ENCODE measurements at regions of chr17 and their contacts with region 1.

Region 1: DNA sequence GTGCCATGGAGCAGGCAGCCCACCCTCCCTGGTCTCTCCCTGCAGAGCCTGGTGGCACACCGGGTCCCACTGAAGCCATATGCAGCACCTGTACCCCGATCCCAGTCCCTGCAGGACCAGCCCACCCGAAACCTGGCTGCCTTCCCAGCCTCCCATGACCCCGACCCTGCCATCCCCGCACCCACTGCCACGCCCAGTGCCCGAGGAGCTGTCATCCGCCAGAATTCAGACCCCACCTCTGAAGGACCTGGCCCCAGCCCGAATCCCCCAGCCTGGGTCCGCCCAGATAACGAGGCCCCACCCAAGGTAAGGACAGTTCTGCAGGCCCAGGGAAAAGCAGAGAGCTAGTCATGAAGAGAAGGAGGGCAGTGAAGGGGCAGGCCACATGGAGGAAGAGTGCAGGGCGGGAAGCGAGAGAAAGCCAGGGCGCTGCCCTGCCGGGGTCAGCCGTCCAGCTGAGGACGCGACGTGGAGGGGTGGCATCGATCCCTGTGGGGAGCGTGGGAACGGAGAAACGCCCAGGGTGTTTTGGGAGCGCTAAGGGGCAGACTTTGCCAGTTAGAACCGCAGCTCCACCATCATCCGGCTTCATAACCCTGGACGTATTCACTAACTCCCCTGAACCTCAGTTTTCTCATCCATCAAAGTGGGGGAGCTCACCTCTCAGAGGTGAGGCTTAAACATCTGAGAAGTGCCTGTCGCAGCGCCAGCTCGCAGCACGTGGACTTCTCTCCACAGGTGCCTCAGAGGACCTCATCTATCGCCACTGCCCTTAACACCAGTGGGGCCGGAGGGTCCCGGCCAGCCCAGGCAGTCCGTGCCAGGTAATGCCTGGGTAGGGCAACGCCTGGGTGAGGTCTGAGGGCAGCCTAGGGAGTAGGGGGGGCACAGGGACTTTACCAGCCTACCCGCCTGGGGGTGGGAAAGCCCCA is 7.7 kb upstream of the C17orf107 start:
- DNase-seq: peak in 2 of 5 donors; percentile 25 to 66
- ATAC-seq: no peak
- H3K4me3 ChIP-seq: no peak overlapping the region
- H3K27ac ChIP-seq: no peak overlapping the region
- H3K4me1 ChIP-seq: no peaks in the 10 kb centered on the region
- H3K27me3 ChIP-seq: no peaks in the 10 kb centered on the region
- CTCF ChIP-seq: no peak
- POLR2A ChIP-seq: no peak

Region 2: DNA sequence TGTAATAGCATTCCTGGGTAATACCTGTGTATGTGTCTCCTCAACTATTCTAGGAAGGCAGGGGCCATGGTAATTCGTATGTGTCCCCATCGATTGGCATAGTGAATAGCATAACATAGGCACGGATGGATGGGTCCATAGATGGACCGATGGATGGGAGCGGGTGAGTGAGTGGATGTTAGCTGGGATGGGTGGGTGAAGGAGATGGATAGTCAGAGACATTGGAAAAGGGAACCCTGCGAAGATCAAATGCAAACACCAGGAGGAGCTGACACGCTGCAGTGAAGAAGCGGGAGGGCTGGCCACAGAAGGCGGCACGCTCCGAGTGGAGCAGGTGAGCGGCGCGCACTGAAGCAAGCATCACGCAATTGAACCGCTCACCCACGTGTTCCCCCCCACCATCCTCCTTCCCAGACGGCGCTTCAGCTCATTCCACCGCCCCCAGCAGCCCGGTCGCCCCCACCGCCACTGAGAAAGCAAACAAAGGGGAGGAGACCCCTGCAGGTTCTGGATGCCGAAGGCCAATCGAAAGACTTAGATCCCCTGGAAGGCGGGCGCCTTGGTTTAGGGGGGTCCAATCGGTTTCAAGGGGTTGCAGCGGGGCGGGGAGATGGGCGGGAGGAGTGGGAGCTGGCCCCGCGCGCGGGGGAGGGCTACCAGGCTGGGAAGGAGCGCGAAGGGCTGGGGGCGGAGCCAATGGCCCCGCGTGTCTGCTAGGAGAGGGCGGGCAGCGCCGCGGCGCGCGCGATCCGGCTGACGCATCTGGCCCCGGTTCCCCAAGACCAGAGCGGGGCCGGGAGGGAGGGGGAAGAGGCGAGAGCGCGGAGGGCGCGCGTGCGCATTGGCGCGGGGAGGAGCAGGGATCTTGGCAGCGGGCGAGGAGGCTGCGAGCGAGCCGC is 181.6 kb before region 1 on chr17 and contains the start of gene ARRB2:
- intact Hi-C with region 1: loop called in 6 of 10 experiments (anchors 2 to 5 kb)
- DNase-seq: peak; percentile 97 to 100 (median 98)
- ATAC-seq: peak; percentile 95
- H3K4me3 ChIP-seq: peak within 1 kb of the TSS; percentile 47 to 93 (median 72)
- H3K27ac ChIP-seq: peak within 1 kb of the TSS; percentile 33 to 94 (median 77)
- H3K4me1 ChIP-seq: peaks cover 0 to 42% (median 11%) of the 10 kb centered on the region in 12 donors
- H3K27me3 ChIP-seq: no peaks in the 10 kb centered on the region
- CTCF ChIP-seq: peak; percentile 37 to 80 (median 61)
- POLR2A ChIP-seq: peak in 1 of 2 donors; percentile 65
- total RNA-seq, gene ARRB2: 10.9 to 87.6 (median 23.0) TPM

Region 3: DNA sequence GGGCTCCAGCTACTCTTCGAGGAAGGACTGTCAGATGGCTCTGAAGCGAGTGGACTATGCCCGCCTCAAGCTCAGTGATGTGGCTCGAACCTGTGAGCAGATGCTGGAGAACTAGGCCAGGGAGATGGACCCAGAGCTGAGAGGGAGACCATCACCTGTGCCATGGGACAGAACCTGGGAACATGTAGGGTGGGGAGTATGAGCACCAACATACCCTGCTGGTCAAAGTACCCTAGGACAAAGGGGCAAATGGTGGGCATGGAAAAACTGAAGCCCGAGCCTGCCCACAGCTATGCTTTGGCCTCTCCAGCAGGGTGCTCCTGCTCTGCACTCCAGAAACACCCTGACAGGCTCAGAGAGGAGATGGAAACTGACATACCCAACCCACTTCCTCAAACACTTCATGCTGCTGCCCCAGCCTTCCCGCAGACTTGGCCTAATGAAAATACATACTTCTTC is 158.6 kb before region 1 on chr17:
- intact Hi-C with region 1: loop called in 8 of 10 experiments (anchors 2 to 10 kb)
- DNase-seq: peak in 2 of 5 donors; percentile 48 to 55
- ATAC-seq: no peak
- H3K4me3 ChIP-seq: no peak overlapping the region
- H3K27ac ChIP-seq: peak overlapping the region in 3 of 12 donors; percentile 24 to 91 (median 62)
- H3K4me1 ChIP-seq: peaks cover 0 to 55% (median 11%) of the 10 kb centered on the region in 12 donors
- H3K27me3 ChIP-seq: peaks cover 0 to 4% (median 0%) of the 10 kb centered on the region in 9 donors
- CTCF ChIP-seq: peak in 2 of 12 donors; percentile 8 to 10
- POLR2A ChIP-seq: no peak